Transverse colon (tissue), 4 donors: ENCODE measurements at regions of chr10 and their contacts with region 1.

Region 1: DNA sequence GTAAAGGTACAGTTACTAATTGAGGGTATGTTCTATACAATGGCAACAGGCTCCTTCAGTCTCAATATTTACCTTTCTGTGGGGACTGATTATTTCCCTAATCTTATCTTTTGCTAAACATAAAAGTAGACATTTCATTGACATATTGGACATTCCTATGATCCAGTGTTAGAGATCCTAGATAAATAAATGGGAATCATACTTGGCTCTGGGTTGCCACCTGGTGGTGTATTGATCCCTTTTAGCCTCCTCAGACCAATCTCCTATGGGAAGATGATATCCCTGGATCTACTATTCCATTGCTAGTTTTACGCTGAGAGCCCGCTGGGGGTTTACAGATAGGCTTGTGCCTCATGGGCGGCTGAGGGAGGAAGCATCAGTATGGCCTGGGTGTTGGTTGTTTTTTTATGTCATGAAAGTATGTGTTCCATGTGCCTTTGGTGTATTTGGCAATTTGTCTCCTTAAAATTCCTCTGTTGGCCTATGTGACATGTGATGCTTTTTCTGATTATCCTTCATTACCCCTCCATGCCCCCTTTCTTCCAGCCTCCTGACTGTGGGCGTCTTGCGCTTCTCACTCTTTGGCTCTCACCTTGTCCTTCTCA is 18.8 kb downstream of the CELF2 start:
- DNase-seq: peak; percentile 67
- H3K4me3 ChIP-seq: no peak overlapping the region
- H3K27ac ChIP-seq: peak overlapping the region in 1 of 4 donors; percentile 22
- H3K4me1 ChIP-seq: peaks cover 0 to 36% (median 13%) of the 10 kb centered on the region in 4 donors
- H3K27me3 ChIP-seq: no peaks in the 10 kb centered on the region
- CTCF ChIP-seq: peak; percentile 51 to 70 (median 66)
- EP300 ChIP-seq: no peak
- POLR2A ChIP-seq: no peak

Region 2: GRCh38 chr10:9608602-9609001 is 1427.9 kb before region 1 on chr10:
- in situ Hi-C with region 1: loop called in 1 of 4 experiments (anchors 25 kb)
- intact Hi-C with region 1: no loop called
- DNase-seq: no peak
- H3K4me3 ChIP-seq: no peak overlapping the region
- H3K27ac ChIP-seq: no peak overlapping the region
- H3K4me1 ChIP-seq: no peaks in the 10 kb centered on the region
- H3K27me3 ChIP-seq: no peaks in the 10 kb centered on the region
- CTCF ChIP-seq: peak in 3 of 5 experiments; percentile 12 to 28 (median 17)
- EP300 ChIP-seq: no peak
- POLR2A ChIP-seq: no peak

Region 3: DNA sequence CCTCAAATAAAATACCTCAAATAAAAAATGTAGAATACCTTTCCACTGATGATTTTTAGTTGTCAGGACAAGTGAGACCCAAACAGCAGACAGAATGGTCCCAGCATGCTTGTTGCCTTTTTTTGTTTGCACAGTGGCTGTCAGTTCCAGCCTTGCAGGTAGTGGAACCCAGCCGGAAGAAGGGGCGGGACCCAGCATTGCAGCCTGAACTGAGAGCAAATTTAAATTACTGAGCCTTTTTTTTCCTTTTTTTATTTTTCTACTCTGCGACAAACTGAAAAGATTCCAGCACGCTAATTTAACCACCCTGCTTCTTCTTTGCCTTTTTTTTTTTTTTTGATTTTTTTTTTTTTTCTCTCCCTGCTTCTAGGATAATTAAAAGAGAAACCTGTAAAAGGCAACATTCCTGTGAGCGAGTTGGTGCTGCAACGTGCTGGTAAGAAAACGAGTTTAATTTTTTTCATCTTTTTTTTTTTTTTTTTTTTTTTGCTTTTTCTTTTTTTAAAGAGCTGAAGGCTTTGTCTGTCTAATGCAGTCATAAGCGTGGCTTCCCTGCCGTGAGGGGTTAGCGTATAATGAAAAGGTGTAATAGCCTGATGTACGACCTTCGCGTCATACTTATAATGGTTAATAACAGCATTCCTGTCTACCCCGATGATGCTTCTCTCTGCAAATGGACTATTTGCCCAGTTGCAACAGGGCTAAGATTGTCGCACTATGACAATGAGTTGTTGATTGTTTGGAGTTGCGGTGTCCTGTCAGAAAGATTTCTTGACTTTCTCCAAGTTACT is 574.2 kb before region 1 on chr10:
- in situ Hi-C with region 1: no loop called
- intact Hi-C with region 1: no loop called
- DNase-seq: no peak
- H3K4me3 ChIP-seq: no peak overlapping the region
- H3K27ac ChIP-seq: no peak overlapping the region
- H3K4me1 ChIP-seq: no peaks in the 10 kb centered on the region
- H3K27me3 ChIP-seq: no peaks in the 10 kb centered on the region
- CTCF ChIP-seq: no peak
- EP300 ChIP-seq: no peak
- POLR2A ChIP-seq: no peak